MCF 10A (cell line): ENCODE measurements at regions of chr11 and their contacts with region 1.

Region 1: DNA sequence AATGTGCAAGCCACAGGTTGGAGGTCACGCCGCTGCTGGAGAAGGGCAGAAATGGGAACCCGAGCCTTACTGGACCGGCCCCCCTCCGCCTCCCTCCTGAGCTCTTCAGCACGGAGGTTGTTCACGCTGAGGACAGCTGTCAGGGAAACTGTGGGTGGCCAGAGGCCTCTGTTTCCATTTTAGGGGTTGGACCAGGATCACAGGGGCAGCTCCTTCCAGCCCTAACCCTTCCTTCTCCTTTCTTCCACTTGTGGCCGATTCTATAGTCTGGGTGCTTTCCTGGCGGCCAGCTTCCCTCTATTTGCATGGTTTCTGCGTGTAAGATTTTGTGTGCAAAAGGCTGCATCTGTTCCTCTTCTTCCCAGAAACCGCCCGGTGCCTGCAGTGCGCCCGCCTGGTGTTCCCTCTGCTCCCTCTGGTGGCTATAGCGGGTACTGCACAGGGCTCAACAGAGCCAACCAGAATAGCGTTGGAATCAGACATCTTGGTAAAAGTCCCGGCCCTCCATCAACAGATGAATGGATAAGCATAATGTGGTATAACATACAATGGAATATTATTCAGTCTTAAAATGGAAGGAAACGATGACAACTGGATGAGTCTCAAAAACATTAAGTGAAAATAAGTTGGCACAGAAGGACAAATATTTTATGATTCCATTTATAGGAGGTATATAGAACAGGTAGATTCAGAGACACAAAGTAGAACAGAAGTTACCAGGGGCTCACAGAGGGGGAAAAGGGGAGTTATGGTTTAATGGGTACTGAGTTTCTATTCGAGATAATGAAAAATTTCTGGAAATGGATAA is 8.4 kb upstream of the SLC22A8 start:
- DNase-seq: peak; percentile 76
- H3K4me3 Mint-ChIP-seq: no peak overlapping the region
- H3K27ac Mint-ChIP-seq: no peak overlapping the region
- H3K4me1 Mint-ChIP-seq: peaks cover 6% of the 10 kb centered on the region
- H3K27me3 Mint-ChIP-seq: peaks cover 25% of the 10 kb centered on the region
- CTCF ChIP-seq: peak; percentile 97

Region 2: GRCh38 chr11:62914416-62914815 is 109.6 kb before region 1 on chr11:
- CTCF ChIA-PET with region 1: interaction called, 456 read pairs
- POLR2A ChIA-PET with region 1: no interaction called
- intact Hi-C with region 1: no loop called
- DNase-seq: no peak
- H3K4me3 Mint-ChIP-seq: no peak overlapping the region
- H3K27ac Mint-ChIP-seq: no peak overlapping the region
- H3K4me1 Mint-ChIP-seq: no peaks in the 10 kb centered on the region
- H3K27me3 Mint-ChIP-seq: no peaks in the 10 kb centered on the region
- CTCF ChIP-seq: no peak

Region 3: DNA sequence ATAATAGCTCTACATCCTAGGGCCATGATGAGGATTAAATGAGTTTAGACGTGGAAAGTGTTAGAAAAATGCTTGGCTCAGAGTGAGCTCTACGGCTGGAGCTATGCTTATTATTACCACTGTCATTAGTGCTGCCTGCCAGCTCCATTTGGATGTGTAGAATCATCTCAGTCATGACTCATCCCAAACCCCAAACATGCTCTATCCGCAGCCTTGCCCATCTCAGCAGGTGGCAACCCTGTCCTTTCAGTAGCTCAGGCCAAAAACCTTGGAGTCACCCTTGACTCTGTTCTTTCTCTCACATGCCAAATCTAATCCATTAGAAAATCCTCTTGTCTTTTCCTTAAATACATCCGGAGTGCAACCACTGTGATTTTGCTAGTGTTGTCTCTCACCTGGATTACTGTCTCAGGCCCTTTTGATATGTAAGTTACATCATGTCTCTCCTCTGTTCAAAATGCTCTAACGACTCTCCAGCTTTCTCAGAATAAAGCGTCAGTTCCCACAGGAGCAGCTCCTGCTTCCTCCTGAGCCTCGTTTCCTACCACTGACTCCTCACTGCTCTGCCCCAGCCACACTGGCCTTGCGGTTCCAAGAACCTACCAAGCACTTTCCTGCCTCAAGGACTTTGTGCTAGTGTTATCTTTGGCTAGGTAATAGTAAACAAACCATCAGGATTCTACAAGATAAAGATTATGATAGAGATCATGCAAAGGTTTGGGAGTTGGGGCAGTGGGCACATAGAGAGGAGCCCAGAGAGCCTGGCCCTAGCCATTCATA is 92.4 kb before region 1 on chr11:
- CTCF ChIA-PET with region 1: interaction called, 13 read pairs
- POLR2A ChIA-PET with region 1: no interaction called
- intact Hi-C with region 1: no loop called
- DNase-seq: peak; percentile 79
- H3K4me3 Mint-ChIP-seq: no peak overlapping the region
- H3K27ac Mint-ChIP-seq: no peak overlapping the region
- H3K4me1 Mint-ChIP-seq: peaks cover 8% of the 10 kb centered on the region
- H3K27me3 Mint-ChIP-seq: peaks cover 18% of the 10 kb centered on the region
- CTCF ChIP-seq: no peak

Region 4: GRCh38 chr11:62974848-62975522 is 49.1 kb before region 1 on chr11:
- CTCF ChIA-PET with region 1: interaction called, 20 read pairs
- POLR2A ChIA-PET with region 1: no interaction called
- intact Hi-C with region 1: no loop called
- DNase-seq: peak; percentile 61
- H3K4me3 Mint-ChIP-seq: no peak overlapping the region
- H3K27ac Mint-ChIP-seq: no peak overlapping the region
- H3K4me1 Mint-ChIP-seq: no peaks in the 10 kb centered on the region
- H3K27me3 Mint-ChIP-seq: peaks cover 50% of the 10 kb centered on the region
- CTCF ChIP-seq: peak; percentile 56

Region 5: DNA sequence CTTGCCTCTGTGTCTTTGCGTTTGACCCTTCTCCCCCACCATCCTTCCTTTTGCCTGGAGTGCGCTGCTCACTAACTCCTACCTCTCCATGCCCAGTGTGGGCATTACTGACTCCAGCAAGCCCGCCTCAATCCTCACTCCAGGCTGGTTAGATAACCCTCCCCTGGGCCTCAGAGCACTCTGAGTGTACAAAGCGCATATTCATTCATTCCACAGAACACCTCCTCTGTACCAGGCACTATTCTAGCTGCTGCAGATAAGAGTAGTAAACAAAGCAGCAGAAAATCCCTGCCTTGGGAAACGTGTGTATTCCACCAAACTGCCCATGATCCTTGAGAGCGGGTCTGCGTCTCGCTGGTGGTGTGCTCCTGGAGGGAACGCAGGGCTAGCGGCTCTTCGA is 11.6 kb before region 1 on chr11:
- CTCF ChIA-PET with region 1: interaction called, 74 read pairs
- POLR2A ChIA-PET with region 1: no interaction called
- intact Hi-C with region 1: no loop called
- DNase-seq: no peak
- H3K4me3 Mint-ChIP-seq: no peak overlapping the region
- H3K27ac Mint-ChIP-seq: no peak overlapping the region
- H3K4me1 Mint-ChIP-seq: no peaks in the 10 kb centered on the region
- H3K27me3 Mint-ChIP-seq: peaks cover 53% of the 10 kb centered on the region
- CTCF ChIP-seq: no peak